WTC11 (cell line): ENCODE measurements at regions of chrX and their contacts with region 1.

Region 1: DNA sequence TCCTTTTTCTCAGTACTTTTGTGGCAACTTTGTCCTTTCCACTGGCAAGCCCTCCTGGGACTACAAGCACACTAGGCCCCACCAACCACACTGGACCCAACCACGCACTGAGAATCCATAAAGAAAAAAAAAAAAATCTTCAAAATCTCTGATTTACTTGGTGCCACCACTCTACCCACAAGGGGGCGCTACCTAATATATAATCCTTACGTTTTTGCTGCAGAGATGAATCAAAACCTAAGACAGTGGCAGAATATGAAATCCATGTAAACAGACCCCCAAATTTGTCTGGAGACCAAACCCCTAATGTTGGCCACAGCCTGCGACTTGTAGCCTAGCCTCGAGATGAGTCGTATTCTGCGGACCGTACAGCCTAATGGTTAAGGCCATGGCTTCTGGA is 63.5 kb upstream of the ARHGAP36 start:
- DNase-seq: peak; percentile 24
- ATAC-seq: no peak
- H3K4me3 Mint-ChIP-seq: no peak overlapping the region
- H3K27ac Mint-ChIP-seq: no peak overlapping the region
- H3K4me1 Mint-ChIP-seq: no peaks in the 10 kb centered on the region
- H3K27me3 Mint-ChIP-seq: no peaks in the 10 kb centered on the region
- CTCF ChIP-seq: peak; percentile 47

Region 2: GRCh38 chrX:131677655-131678628 is 683.3 kb after region 1 on chrX:
- CTCF ChIA-PET with region 1: interaction called, 16 read pairs
- POLR2A ChIA-PET with region 1: no interaction called
- DNase-seq: peak; percentile 65
- ATAC-seq: peak; percentile 84
- H3K4me3 Mint-ChIP-seq: no peak overlapping the region
- H3K27ac Mint-ChIP-seq: no peak overlapping the region
- H3K4me1 Mint-ChIP-seq: no peaks in the 10 kb centered on the region
- H3K27me3 Mint-ChIP-seq: no peaks in the 10 kb centered on the region
- CTCF ChIP-seq: peak; percentile 58